Activated CD4-positive, alpha-beta T cell treated with anti-CD3 and anti-CD28 coated beads, Interleukin-2, amount 10 ng/mL, durations not matched to agents 7 days and 5 days (primary cell): ENCODE measurements at regions of chr10 and their contacts with region 1.

Region 1: DNA sequence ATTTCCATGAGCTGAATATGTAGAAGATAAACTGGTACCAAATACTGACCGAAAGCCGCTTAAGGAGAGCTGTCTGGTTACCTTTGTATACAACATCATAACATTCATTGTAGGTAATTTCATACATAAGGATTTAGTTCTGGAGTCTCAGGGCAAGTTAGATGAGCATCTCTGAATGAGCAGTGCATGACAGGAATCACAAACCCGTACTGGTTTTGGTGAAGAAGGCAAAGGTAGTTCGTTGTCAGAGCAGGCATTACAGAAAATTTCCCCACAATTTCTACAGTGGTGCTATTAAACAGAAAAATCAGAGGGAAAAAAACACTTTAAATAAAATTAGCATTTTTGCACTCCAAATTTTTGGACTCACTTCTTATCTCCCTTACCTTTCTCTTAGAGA is 12.9 kb upstream of the PBLD start:
- DNase-seq: no peak
- H3K4me3 Mint-ChIP-seq: no peak overlapping the region
- H3K27ac Mint-ChIP-seq: no peak overlapping the region
- H3K4me1 Mint-ChIP-seq: peaks cover 19% of the 10 kb centered on the region
- H3K27me3 Mint-ChIP-seq: no peaks in the 10 kb centered on the region

Region 2: DNA sequence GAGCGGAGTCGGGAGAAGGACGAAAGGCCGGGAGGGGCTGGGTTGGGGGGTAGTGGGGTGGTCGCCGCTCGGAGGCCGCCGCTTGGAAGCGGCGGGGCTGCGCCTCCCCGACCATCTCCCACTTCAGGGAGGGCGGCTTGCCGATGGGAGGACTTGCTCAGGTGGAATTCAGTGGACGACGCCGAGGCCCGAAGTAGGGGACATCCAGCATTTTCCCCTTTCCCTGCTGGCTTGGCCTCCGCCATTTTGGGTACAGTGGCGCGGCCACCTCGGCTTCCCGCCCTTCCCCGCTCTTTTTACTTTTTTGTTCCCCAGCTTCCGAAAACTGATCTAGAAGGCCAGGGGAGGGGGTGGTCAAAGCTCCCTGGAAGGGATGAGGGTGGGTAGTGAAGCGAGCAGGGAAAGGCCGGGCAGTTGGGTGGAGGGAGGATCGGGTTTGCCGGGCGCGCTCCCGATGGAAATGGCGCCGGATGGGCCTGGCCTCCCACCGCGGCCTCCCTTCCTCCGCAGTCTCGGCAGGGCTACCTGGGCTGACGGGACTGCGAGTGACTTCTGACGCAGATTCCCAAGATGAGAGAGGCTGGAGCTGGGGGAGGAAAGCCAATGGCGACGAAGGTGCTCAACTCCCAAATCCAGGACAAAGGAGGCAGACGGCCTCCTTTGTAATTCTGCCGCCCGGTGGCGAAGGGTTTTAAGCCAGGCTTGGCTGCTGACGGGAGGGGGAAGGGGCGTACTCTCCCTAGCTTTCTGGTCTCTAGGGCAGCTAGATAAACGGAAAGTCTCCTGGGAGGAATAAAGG is 13.2 kb before region 1 on chr10 and contains the start of gene PBLD:
- CTCF ChIA-PET with region 1: interaction called, 7 read pairs
- POLR2A ChIA-PET with region 1: interaction called, 11 read pairs
- DNase-seq: peak; percentile 67
- H3K4me3 Mint-ChIP-seq: peak within 1 kb of the TSS; percentile 100
- H3K27ac Mint-ChIP-seq: peak within 1 kb of the TSS; percentile 100
- H3K4me1 Mint-ChIP-seq: peaks cover 58% of the 10 kb centered on the region
- H3K27me3 Mint-ChIP-seq: no peaks in the 10 kb centered on the region
- total RNA-seq, gene PBLD: 1.6 to 2.0 TPM

Region 3: DNA sequence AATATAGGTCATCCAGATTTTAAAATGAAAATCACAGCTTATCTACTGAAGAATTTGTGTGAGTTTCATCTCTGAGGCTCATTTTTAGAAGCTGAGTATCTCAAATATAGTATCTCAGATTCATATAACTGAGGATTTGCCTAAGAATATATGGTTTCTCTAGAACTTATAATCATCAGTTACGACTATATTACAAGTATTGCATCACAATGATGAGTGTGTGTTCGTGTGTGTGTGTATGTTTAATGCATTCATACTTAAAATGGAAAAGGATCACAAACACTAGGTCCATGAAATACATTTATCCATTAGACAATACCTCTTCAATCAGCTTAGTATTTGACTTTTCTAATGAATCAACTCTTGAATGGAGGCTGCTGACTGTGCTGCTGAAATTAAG is 40.1 kb after region 1 on chr10:
- CTCF ChIA-PET with region 1: no interaction called
- POLR2A ChIA-PET with region 1: no interaction called
- DNase-seq: no peak
- H3K4me3 Mint-ChIP-seq: no peak overlapping the region
- H3K27ac Mint-ChIP-seq: no peak overlapping the region
- H3K4me1 Mint-ChIP-seq: no peaks in the 10 kb centered on the region
- H3K27me3 Mint-ChIP-seq: no peaks in the 10 kb centered on the region